OCI-LY7 (cell line): ENCODE measurements at regions of chr10 and their contacts with region 1.

Region 1: DNA sequence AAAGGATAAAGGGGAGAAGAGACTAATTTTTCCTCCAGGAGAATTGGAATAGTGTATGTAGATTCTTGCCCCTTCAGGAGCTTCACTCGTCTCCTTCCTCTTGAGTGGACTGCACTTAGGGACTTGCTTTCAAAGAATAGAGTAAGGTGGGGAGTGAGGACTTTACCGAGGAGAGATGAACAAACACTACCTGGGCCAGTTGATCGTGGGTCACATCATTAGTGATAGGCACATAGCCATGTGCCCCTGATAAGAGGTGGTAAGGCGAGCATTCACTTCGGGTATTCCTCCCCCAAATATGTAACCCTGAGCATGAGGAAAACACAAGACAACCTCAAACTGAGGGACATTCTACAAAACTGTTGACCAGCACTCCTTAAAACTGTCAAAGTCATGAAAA is 14.6 kb upstream of the KIFBP start:
- DNase-seq: no peak
- H3K4me3 ChIP-seq: no peak overlapping the region
- H3K27ac ChIP-seq: no peak overlapping the region
- H3K4me1 ChIP-seq: no peaks in the 10 kb centered on the region
- CTCF ChIP-seq: no peak

Region 2: GRCh38 chr10:68955832-68956532 is 18.0 kb before region 1 on chr10 and contains the start of gene DDX21:
- CTCF ChIA-PET with region 1: no interaction called
- POLR2A ChIA-PET with region 1: interaction called, 11 read pairs
- intact Hi-C with region 1: no loop called
- DNase-seq: peak; percentile 94
- H3K4me3 ChIP-seq: peak within 1 kb of the TSS; percentile 89
- H3K27ac ChIP-seq: peak within 1 kb of the TSS; percentile 86
- H3K4me1 ChIP-seq: peaks cover 36% of the 10 kb centered on the region
- CTCF ChIP-seq: peak; percentile 89
- total RNA-seq, gene DDX21: 107 and 133 TPM in 2 replicates